ENCODE measurements at regions of chr3 and their contacts with region 1.

Region 1: GRCh38 chr3:124545891-124546290 is 184.4 kb upstream of the UMPS start:
- DNase-seq: no peak
- H3K4me3 ChIP-seq: no peak overlapping the region
- H3K27ac ChIP-seq: no peak overlapping the region
- H3K4me1 ChIP-seq: peaks cover 0 to 8% of the 10 kb centered on the region in 2 donors
- H3K27me3 ChIP-seq: no peaks in the 10 kb centered on the region
- CTCF ChIP-seq: no peak
- POLR2A ChIP-seq: no peak

Region 2: GRCh38 chr3:124492811-124493210 is 53.1 kb before region 1 on chr3:
- intact Hi-C with region 1: loop called (anchors 5 kb)
- DNase-seq: peak; percentile 62 to 77
- H3K4me3 ChIP-seq: no peak overlapping the region
- H3K27ac ChIP-seq: no peak overlapping the region
- H3K4me1 ChIP-seq: peaks cover 0 to 9% of the 10 kb centered on the region in 2 donors
- H3K27me3 ChIP-seq: no peaks in the 10 kb centered on the region
- CTCF ChIP-seq: peak in 4 of 6 experiments; percentile 47 to 56 (median 50)
- POLR2A ChIP-seq: no peak

Region 3: DNA sequence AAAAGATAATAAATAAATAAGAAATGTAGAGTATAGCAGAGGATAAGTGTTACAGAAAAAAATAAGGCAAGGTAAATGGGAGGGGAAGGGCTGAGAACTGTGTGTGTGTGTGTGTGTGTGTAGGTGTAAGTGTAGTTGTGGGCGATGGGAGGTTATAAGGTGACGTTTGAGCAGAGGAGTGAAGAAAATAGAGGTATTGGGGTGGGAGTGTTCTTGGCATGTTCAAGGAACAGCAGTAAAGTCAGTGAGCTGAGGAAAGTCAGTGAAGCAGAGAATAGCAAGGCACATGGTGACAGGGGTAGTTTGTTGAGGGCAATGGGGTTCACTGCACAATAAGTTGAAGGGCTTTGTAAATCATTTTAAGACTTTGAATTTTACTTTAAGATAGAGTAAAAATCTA is 860.2 kb after region 1 on chr3:
- intact Hi-C with region 1: no loop called
- DNase-seq: peak in 1 of 2 donors; percentile 25
- H3K4me3 ChIP-seq: no peak overlapping the region
- H3K27ac ChIP-seq: no peak overlapping the region
- H3K4me1 ChIP-seq: peaks cover 11 to 18% of the 10 kb centered on the region in 2 donors
- H3K27me3 ChIP-seq: no peaks in the 10 kb centered on the region
- CTCF ChIP-seq: no peak
- POLR2A ChIP-seq: no peak